ENCODE measurements at regions of chr22 and their contacts with region 1.

Region 1: DNA sequence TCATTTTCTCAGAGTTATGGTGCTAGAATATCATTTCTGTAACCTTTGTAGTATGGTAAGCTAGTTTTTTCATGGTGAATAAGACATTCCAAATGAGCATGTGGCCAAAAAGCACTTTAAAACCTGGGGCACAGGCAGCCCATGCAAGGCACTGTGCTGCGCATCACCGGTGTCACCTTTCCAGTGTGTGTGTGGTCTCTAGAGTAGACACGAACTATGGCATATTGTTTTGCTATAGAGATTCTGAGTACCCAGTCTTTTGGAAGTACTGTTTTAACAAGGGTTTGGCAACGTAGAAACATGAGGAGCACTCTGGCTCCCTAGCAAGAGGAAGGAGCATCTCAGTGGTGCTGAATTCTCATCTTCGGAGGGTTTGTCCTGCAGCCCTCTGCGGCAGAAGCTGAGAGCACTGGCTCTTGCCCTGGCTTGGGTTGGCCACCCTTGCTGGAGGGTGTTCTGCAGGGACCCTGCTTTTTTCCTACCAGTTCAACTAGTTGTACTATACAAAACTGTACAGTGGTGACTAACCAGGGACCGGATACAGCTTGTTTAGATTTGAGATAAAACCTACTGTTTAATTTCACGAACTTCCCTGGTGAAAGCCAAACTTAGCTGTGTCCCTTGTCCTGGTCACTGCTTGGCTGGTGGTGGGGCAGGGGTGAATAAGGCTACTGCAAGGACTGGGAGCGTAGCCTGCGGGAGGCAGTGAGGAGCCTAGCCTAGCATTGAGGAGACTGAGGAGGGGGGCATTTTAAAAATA is 135.7 kb downstream of the ATXN10 start:
- DNase-seq: no peak
- CTCF ChIP-seq: no peak

Region 2: DNA sequence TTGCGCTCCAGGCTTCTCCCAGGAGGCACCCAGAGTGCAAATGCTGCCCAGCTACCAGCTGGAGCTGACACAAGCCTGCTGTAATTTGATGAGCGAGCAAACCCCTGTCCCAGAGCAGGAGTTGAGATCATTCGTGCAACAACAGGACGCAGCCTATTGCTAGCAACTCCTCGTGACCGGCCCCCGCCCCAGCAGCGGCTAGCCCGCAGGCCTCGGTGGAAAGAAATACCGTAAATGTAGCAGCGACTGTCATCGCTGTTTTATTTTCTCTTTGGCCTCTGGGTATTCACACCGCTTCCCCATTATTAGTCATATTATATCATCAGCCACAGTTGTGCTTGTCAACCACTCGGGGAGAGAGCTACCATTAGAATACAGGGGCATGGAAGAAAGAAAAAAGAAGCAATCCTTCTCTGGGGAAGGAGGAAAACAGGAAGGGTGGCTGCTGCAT is 194.9 kb before region 1 on chr22:
- CTCF ChIA-PET with region 1: no interaction called
- POLR2A ChIA-PET with region 1: no interaction called
- DNase-seq: no peak
- CTCF ChIP-seq: no peak

Region 3: DNA sequence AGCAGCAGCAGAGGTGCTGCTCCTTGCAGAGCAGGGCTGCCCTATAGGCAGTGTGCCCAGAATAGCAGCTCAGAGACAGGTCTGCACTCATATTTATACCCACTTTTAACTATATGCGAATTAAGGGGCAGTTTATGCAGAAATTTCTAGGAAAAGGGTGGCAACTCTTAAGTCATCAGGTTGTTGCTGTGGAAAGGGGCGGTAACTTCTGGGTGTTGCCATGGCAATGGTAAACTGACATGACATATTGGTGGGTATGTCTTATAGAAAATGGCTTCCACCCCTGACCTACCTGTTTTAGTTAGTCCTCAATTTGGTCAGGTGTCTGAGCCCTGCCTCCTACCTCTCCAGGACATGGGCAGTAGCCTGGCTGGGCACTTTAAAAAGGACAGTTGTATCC is 13.4 kb before region 1 on chr22:
- CTCF ChIA-PET with region 1: interaction called, 15 read pairs
- POLR2A ChIA-PET with region 1: no interaction called
- DNase-seq: no peak
- CTCF ChIP-seq: no peak

Measured in GM10248 (cell line).